WTC11 (cell line): ENCODE measurements at regions of chr11 and their contacts with region 1.

Region 1: DNA sequence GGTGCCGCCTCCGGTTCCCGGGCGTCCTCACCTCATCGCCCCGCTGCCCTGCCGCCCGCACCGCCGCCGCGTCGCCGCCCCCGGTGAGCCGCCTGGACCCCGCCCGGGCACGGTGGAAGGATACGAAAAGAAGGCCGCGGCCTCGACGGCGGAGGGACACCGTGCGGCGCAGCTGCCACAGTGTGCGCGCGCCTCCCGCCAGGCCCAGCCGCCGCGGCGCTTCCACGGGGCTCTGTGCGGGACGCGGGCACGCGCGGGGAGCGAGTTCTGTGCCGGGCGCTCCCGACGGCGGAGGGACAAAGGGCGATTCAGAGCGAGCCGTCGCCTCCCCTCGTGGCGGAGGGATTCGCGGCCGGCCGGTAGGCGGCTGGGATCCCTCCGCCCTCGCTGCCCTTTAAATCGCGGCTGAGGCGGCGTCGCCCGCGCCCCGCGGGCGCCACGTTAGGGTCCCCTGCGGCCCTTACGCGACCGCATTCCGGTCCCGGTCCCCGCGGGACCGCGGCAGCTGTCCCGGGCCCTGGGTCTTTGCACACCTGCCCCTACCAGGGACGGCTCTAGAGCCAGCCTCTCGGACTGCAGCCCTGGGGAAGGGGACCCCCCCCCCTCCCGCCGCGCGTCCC is 569 bp upstream of the KMT5B start:
- DNase-seq: peak; percentile 78
- ATAC-seq: peak; percentile 9
- H3K4me3 Mint-ChIP-seq: peak overlapping the region; percentile 57
- H3K27ac Mint-ChIP-seq: no peak overlapping the region
- H3K4me1 Mint-ChIP-seq: peaks cover 44% of the 10 kb centered on the region
- H3K27me3 Mint-ChIP-seq: peaks cover 9% of the 10 kb centered on the region
- CTCF ChIP-seq: no peak

Region 2: GRCh38 chr11:68127714-68128681 is 85.7 kb before region 1 on chr11:
- CTCF ChIA-PET with region 1: interaction called, 16 read pairs
- POLR2A ChIA-PET with region 1: interaction called, 4 read pairs
- DNase-seq: peak; percentile 97
- ATAC-seq: peak; percentile 86
- H3K4me3 Mint-ChIP-seq: peak overlapping the region; percentile 49
- H3K27ac Mint-ChIP-seq: peak overlapping the region; percentile 82; the same call in 1 of the 2 replicates
- H3K4me1 Mint-ChIP-seq: peaks cover 60% of the 10 kb centered on the region
- H3K27me3 Mint-ChIP-seq: peaks cover 9% of the 10 kb centered on the region
- CTCF ChIP-seq: no peak

Region 3: GRCh38 chr11:68186061-68186460 is 27.6 kb before region 1 on chr11:
- CTCF ChIA-PET with region 1: interaction called, 10 read pairs
- POLR2A ChIA-PET with region 1: no interaction called
- DNase-seq: no peak
- ATAC-seq: peak; percentile 81
- H3K4me3 Mint-ChIP-seq: peak overlapping the region; percentile 37
- H3K27ac Mint-ChIP-seq: peak overlapping the region; percentile 85
- H3K4me1 Mint-ChIP-seq: peaks cover 22% of the 10 kb centered on the region
- H3K27me3 Mint-ChIP-seq: no peaks in the 10 kb centered on the region
- CTCF ChIP-seq: no peak

Region 4: GRCh38 chr11:68199295-68199987 is 14.2 kb before region 1 on chr11:
- CTCF ChIA-PET with region 1: interaction called, 24 read pairs
- POLR2A ChIA-PET with region 1: interaction called, 4 read pairs
- DNase-seq: no peak
- ATAC-seq: no peak
- H3K4me3 Mint-ChIP-seq: no peak overlapping the region
- H3K27ac Mint-ChIP-seq: peak overlapping the region; percentile 81
- H3K4me1 Mint-ChIP-seq: peaks cover 62% of the 10 kb centered on the region
- H3K27me3 Mint-ChIP-seq: no peaks in the 10 kb centered on the region
- CTCF ChIP-seq: no peak

Region 5: GRCh38 chr11:68584097-68584496 is 370.4 kb after region 1 on chr11:
- CTCF ChIA-PET with region 1: no interaction called
- POLR2A ChIA-PET with region 1: no interaction called
- DNase-seq: peak; percentile 87
- ATAC-seq: peak; percentile 96
- H3K4me3 Mint-ChIP-seq: no peak overlapping the region
- H3K27ac Mint-ChIP-seq: no peak overlapping the region
- H3K4me1 Mint-ChIP-seq: no peaks in the 10 kb centered on the region
- H3K27me3 Mint-ChIP-seq: no peaks in the 10 kb centered on the region
- CTCF ChIP-seq: peak; percentile 84